IMR-90 (cell line): ENCODE measurements at regions of chr17 and their contacts with region 1.

Region 1: GRCh38 chr17:69761751-69762321 is 313.2 kb upstream of the KCNJ16 start:
- DNase-seq: peak; percentile 99
- ATAC-seq: peak; percentile 80
- H3K4me3 ChIP-seq: no peak overlapping the region
- H3K27ac ChIP-seq: peak overlapping the region; percentile 99
- H3K4me1 ChIP-seq: peaks cover 20% of the 10 kb centered on the region
- H3K27me3 ChIP-seq: no peaks in the 10 kb centered on the region
- CTCF ChIP-seq: 0 out of 2 replicates have a peak, but pooled peaks have one; percentile 4
- POLR2A ChIP-seq: no peak; the same call in 1 of the 2 replicates
- RAD21 ChIP-seq: no peak

Region 2: DNA sequence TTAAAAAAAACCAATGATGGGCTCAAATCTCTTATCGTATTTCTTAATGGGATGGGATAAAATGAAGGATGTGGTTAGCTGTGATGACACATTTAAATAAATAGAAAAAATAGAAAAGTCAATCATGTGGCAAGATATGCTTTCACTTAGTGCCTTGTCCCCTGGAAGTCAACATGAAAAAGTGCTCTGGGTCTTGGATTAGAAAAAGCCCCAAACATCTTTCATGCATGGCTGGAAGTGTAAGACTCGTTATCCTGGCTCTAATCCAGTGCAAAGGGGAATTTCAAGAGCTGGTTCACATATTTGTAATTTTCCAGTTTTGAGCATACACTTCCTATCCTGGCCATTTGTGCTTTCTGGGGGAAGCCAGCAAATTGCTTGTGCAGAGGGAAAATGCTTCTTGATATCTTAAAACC is 186.5 kb before region 1 on chr17:
- CTCF ChIA-PET with region 1: no interaction called
- POLR2A ChIA-PET with region 1: no interaction called
- dilution Hi-C with region 1: no loop called
- in situ Hi-C with region 1: no loop called
- intact Hi-C with region 1: loop called (anchors 2 kb)
- DNase-seq: peak; percentile 87
- ATAC-seq: peak; percentile 47
- H3K4me3 ChIP-seq: no peak overlapping the region
- H3K27ac ChIP-seq: peak overlapping the region; percentile 26; the same call in 1 of the 2 replicates
- H3K4me1 ChIP-seq: peaks cover 13% of the 10 kb centered on the region
- H3K27me3 ChIP-seq: no peaks in the 10 kb centered on the region
- CTCF ChIP-seq: no peak
- POLR2A ChIP-seq: no peak
- RAD21 ChIP-seq: no peak

Region 3: DNA sequence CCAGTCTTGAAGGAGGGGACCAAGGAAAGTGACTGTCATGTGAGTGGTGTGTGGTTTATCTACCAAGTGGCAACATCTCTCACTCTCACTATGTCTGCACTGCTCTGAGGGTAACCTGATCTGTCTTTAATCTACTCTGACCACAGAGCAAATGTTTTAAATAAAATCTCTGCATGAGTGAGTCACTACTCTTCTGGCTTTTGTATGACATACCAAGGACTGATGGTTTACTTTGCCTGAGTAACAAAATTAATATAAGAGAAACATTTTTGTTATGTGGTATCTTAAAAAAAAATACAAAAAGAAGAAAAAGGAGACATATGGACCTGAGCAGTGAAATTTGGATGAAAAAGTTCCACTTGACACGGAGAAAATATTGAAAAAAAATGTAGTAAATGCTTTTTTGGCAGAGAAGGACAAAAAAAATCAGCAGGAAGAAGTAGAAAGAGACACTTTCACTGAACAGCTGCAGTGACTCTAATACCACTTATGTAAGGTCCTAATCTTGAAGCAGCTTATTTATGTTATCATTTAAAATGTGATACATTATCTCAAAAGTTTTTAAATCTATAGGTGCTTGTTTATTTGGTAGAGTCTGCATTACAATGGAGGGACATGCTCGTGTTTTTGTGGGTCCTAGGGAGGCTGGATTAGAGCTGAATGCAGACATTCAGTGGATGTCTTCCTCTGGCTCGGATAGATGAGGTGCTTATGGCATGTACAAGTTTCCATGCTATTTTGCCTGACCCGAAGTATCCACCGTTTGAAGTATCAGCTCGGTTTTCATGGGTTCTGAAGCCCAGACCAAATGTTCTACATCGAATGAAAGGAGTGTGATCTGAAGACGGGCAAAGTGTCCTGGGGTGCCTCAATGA is 106.6 kb before region 1 on chr17:
- CTCF ChIA-PET with region 1: interaction called, 3 read pairs
- POLR2A ChIA-PET with region 1: no interaction called
- dilution Hi-C with region 1: no loop called
- in situ Hi-C with region 1: no loop called
- intact Hi-C with region 1: loop called (anchors 1 kb)
- DNase-seq: peak; percentile 95
- ATAC-seq: peak; percentile 94
- H3K4me3 ChIP-seq: no peak overlapping the region
- H3K27ac ChIP-seq: peak overlapping the region; percentile 96
- H3K4me1 ChIP-seq: peaks cover 8% of the 10 kb centered on the region
- H3K27me3 ChIP-seq: peaks cover 19% of the 10 kb centered on the region
- CTCF ChIP-seq: no peak
- POLR2A ChIP-seq: no peak
- RAD21 ChIP-seq: no peak

Region 4: DNA sequence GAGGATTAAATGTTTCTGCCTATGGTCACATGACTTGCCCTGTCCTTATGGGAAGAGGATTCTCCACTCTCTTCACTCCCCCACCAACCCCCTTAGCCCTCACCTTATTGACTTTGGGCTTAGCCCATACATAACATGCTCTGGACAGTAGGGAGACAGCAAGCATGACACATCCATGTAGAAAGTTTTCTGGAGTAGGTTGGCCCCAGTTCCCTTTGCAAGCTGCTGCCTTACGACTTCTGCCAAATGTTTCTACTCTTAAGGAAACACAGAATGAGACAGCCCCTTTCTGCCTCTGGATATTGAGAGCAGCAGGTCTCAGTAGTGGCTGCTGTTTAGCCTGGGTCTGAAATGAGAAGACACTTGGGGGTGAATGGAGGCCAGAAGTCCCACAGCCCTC is 65.2 kb before region 1 on chr17:
- CTCF ChIA-PET with region 1: no interaction called
- POLR2A ChIA-PET with region 1: no interaction called
- dilution Hi-C with region 1: no loop called
- in situ Hi-C with region 1: no loop called
- intact Hi-C with region 1: no loop called
- DNase-seq: peak; percentile 17
- ATAC-seq: peak; percentile 35; the same call in 1 of the 2 replicates
- H3K4me3 ChIP-seq: no peak overlapping the region
- H3K27ac ChIP-seq: no peak overlapping the region
- H3K4me1 ChIP-seq: no peaks in the 10 kb centered on the region
- H3K27me3 ChIP-seq: no peaks in the 10 kb centered on the region
- CTCF ChIP-seq: no peak
- POLR2A ChIP-seq: no peak
- RAD21 ChIP-seq: no peak

Region 5: DNA sequence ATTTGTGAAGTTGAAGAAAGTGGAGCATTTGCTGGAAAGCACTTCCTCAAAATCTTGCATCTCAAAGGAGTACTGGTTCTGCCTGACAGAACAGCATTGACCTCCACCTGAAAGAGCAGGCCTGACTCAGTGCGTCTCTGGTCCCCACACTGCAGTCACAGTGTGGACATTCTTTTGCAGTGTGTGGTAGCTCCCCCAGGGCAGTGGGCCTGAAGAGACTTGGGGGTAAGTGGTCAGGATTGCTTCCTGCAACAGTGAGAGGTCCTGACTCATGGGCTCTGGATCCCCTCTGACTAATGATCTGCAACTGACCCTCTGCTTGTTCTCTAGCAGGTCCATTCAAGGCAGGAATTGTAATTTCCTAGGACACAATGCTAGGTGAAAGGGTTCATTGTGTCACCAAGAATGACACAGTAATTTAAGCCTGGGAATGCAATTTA is 108.3 kb after region 1 on chr17:
- CTCF ChIA-PET with region 1: no interaction called
- POLR2A ChIA-PET with region 1: no interaction called
- dilution Hi-C with region 1: no loop called
- in situ Hi-C with region 1: no loop called
- intact Hi-C with region 1: loop called (anchors 1 kb)
- DNase-seq: peak; percentile 91
- ATAC-seq: peak; percentile 59
- H3K4me3 ChIP-seq: no peak overlapping the region
- H3K27ac ChIP-seq: peak overlapping the region; percentile 78
- H3K4me1 ChIP-seq: peaks cover 21% of the 10 kb centered on the region
- H3K27me3 ChIP-seq: no peaks in the 10 kb centered on the region
- CTCF ChIP-seq: no peak
- POLR2A ChIP-seq: no peak
- RAD21 ChIP-seq: no peak

Region 6: GRCh38 chr17:70137451-70138230 is 375.8 kb after region 1 on chr17:
- CTCF ChIA-PET with region 1: no interaction called
- POLR2A ChIA-PET with region 1: no interaction called
- dilution Hi-C with region 1: no loop called
- in situ Hi-C with region 1: no loop called
- intact Hi-C with region 1: loop called (anchors 1 kb)
- DNase-seq: peak; percentile 95
- ATAC-seq: peak; percentile 85
- H3K4me3 ChIP-seq: peak overlapping the region; percentile 59
- H3K27ac ChIP-seq: peak overlapping the region; percentile 98; the same call in 1 of the 2 replicates
- H3K4me1 ChIP-seq: peaks cover 14% of the 10 kb centered on the region
- H3K27me3 ChIP-seq: no peaks in the 10 kb centered on the region
- CTCF ChIP-seq: 0 out of 2 replicates have a peak, but pooled peaks have one; percentile 3
- POLR2A ChIP-seq: no peak
- RAD21 ChIP-seq: peak; percentile 20; the same call in 1 of the 2 replicates